ENCODE measurements at regions of chr19 and their contacts with region 1.

Region 1: DNA sequence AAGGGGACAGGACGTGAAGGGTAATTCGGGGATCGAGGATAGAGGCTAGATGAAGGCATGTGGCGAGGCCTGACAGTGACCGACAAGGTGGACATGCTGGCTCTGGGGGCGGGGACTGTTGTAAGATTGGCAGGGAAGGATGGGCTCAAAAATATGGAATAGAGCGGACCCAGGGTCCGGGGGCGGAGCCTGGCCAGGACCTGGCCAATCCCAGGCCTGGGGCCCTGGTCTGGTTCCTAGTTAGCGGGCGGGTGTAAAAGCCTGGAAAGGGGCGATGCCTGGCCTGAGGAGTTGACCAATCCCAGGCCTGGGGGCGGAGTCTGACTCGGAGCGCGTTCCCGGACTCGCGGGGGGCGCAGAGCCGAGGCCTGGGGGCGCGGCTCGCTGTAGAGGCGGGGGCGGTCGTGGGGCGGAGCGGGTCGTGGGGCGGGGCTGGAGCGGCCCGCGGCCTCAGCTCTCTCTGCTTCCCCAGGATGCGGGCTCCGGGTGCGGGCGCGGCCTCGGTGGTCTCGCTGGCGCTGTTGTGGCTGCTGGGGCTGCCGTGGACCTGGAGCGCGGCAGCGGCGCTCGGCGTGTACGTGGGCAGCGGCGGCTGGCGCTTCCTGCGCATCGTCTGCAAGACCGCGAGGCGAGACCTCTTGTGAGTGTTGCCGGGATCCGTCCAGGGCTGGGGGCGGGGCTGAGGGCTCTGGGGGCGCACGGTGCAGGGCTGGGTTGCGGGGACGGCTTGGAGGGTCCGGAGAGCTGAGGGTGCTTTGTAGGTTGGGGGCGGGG is at the start of gene SLC27A1:
- DNase-seq: peak; percentile 100
- H3K4me3 ChIP-seq: peak within 1 kb of the TSS; percentile 72 to 90 (median 88)
- H3K27ac ChIP-seq: peak within 1 kb of the TSS; percentile 89 to 91 (median 90)
- H3K4me1 ChIP-seq: peaks cover 0 to 42% (median 33%) of the 10 kb centered on the region in 4 donors
- H3K27me3 ChIP-seq: no peaks in the 10 kb centered on the region
- CTCF ChIP-seq: no peak
- EP300 ChIP-seq: no peak
- POLR2A ChIP-seq: no peak
- total RNA-seq, gene SLC27A1: 13.2 to 23.8 (median 15.9) TPM

Region 2: GRCh38 chr19:17226002-17226933 is 244.0 kb before region 1 on chr19 and contains the start of gene OCEL1:
- intact Hi-C with region 1: loop called (anchors 10 kb)
- DNase-seq: peak; percentile 100
- H3K4me3 ChIP-seq: peak within 1 kb of the TSS; percentile 62 to 74 (median 64)
- H3K27ac ChIP-seq: peak within 1 kb of the TSS; percentile 85 to 94 (median 87)
- H3K4me1 ChIP-seq: peaks cover 0 to 22% (median 16%) of the 10 kb centered on the region in 4 donors
- H3K27me3 ChIP-seq: no peaks in the 10 kb centered on the region
- CTCF ChIP-seq: no peak
- EP300 ChIP-seq: peak in 2 of 4 donors; percentile 12 to 15
- POLR2A ChIP-seq: peak; percentile 54 to 55
- total RNA-seq, gene OCEL1: 7.5 to 15.8 (median 9.6) TPM

Region 3: DNA sequence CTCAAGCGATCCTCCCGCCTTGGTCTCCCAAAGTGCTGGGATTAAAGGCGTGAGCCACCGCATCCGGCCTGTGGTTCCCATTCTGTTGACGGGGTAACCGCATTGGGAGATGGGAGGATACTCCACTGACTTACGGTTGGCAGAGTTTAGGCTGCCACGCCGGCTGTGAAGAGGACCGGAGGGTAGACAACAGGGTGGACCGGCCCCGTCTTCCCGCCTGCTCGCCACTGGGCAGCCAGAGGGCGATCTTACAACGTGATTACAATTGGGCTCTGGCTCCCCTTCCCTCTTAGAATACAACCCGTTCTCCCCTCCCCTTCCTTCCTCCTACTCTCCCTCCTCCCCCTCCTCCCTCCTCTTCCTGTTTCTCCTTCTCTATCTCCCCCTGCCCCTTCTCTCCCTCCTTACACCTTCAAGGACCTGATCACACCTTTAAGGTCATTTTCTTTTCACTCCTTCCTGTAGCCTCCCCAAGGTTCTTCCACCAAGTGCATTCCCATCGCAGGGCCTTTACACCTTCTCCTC is 75.3 kb before region 1 on chr19:
- intact Hi-C with region 1: loop called (anchors 2 kb)
- DNase-seq: no peak
- H3K4me3 ChIP-seq: no peak overlapping the region
- H3K27ac ChIP-seq: no peak overlapping the region
- H3K4me1 ChIP-seq: peaks cover 0 to 23% (median 18%) of the 10 kb centered on the region in 4 donors
- H3K27me3 ChIP-seq: peaks cover 0 to 28% (median 10%) of the 10 kb centered on the region in 3 donors
- CTCF ChIP-seq: peak in 3 of 4 experiments; percentile 63 to 67 (median 65)
- EP300 ChIP-seq: no peak
- POLR2A ChIP-seq: no peak

Region 4: DNA sequence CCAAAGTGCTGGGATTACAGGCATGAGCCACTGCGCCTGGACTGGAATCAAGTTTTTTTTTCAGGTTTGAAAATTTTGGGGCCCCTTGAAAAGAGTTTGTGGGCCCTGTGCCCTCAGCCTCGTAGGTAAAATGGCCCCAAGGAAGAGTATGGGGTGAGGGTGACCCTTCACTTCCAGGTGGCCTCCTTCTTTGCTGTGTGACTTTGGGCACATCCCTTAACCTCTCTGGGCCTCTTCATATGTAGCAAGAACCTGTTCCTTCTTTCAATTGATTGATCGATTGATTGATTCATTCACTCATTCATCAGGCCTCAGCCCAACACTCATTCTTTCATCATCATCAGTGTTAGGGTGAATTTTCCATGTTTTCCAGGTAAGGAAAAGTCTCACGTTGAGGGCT is 18.4 kb before region 1 on chr19:
- intact Hi-C with region 1: loop called (anchors 2 kb)
- DNase-seq: no peak
- H3K4me3 ChIP-seq: no peak overlapping the region
- H3K27ac ChIP-seq: no peak overlapping the region
- H3K4me1 ChIP-seq: peaks cover 0 to 28% (median 17%) of the 10 kb centered on the region in 4 donors
- H3K27me3 ChIP-seq: peaks cover 25 to 33% (median 31%) of the 10 kb centered on the region in 3 donors
- CTCF ChIP-seq: no peak
- EP300 ChIP-seq: no peak
- POLR2A ChIP-seq: no peak

Region 5: DNA sequence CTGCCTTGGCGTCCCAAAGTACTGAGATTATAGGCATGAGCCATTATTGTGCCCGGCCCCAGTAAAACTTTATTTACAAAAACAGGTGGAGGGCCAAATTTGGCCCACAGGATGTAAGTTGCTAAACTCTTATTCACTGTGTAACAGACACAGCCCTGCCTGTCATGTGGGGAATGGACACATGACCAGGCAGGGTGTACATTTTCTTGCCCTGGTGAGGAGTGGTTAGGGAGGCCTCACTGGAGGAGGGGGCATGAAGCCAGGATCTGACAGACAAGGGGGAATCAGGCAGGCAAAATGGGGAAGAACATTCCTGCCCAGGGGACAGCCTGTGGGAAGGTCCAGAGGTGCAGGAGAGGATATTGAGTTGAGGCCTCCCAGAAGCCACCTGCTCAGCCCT is 33.8 kb after region 1 on chr19:
- intact Hi-C with region 1: no loop called
- DNase-seq: no peak
- H3K4me3 ChIP-seq: no peak overlapping the region
- H3K27ac ChIP-seq: no peak overlapping the region
- H3K4me1 ChIP-seq: peaks cover 0 to 13% (median 4%) of the 10 kb centered on the region in 4 donors
- H3K27me3 ChIP-seq: no peaks in the 10 kb centered on the region
- CTCF ChIP-seq: no peak
- EP300 ChIP-seq: no peak
- POLR2A ChIP-seq: no peak

Region 6: GRCh38 chr19:17555480-17555928 is 85.2 kb after region 1 on chr19 and contains the start of gene COLGALT1:
- intact Hi-C with region 1: loop called (anchors 1 kb)
- DNase-seq: peak; percentile 99
- H3K4me3 ChIP-seq: peak within 1 kb of the TSS; percentile 76 to 91 (median 86)
- H3K27ac ChIP-seq: peak within 1 kb of the TSS; percentile 80 to 87 (median 82)
- H3K4me1 ChIP-seq: peaks cover 0 to 24% (median 16%) of the 10 kb centered on the region in 4 donors
- H3K27me3 ChIP-seq: no peaks in the 10 kb centered on the region
- CTCF ChIP-seq: no peak
- EP300 ChIP-seq: no peak
- POLR2A ChIP-seq: no peak
- total RNA-seq, gene COLGALT1: 49.6 to 62.3 (median 53.5) TPM

Measured in sigmoid colon (tissue), 7 donors.